ENCODE measurements at regions of chr20 and their contacts with region 1.

Region 1: GRCh38 chr20:48283305-48284080 is 498.2 kb upstream of the SULF2 start:
- DNase-seq: peak; percentile 22 to 23
- ATAC-seq: peak in 7 of 8 donors; percentile 50 to 87 (median 76)
- H3K4me3 ChIP-seq: no peak overlapping the region
- H3K27ac ChIP-seq: no peak overlapping the region
- H3K4me1 ChIP-seq: peaks cover 0 to 57% (median 27%) of the 10 kb centered on the region in 9 donors
- H3K27me3 ChIP-seq: peaks cover 0 to 10% (median 0%) of the 10 kb centered on the region in 7 donors
- CTCF ChIP-seq: no peak

Region 2: GRCh38 chr20:47973519-47974233 is 309.8 kb before region 1 on chr20:
- intact Hi-C with region 1: loop called in 1 of 10 experiments (anchors 10 kb)
- DNase-seq: peak; percentile 49 to 70
- ATAC-seq: peak; percentile 52 to 90 (median 80)
- H3K4me3 ChIP-seq: no peak overlapping the region
- H3K27ac ChIP-seq: peak overlapping the region in 8 of 10 donors; percentile 36 to 87 (median 70)
- H3K4me1 ChIP-seq: peaks cover 0 to 35% (median 18%) of the 10 kb centered on the region in 9 donors
- H3K27me3 ChIP-seq: peaks cover 0 to 21% (median 8%) of the 10 kb centered on the region in 7 donors
- CTCF ChIP-seq: no peak

Region 3: DNA sequence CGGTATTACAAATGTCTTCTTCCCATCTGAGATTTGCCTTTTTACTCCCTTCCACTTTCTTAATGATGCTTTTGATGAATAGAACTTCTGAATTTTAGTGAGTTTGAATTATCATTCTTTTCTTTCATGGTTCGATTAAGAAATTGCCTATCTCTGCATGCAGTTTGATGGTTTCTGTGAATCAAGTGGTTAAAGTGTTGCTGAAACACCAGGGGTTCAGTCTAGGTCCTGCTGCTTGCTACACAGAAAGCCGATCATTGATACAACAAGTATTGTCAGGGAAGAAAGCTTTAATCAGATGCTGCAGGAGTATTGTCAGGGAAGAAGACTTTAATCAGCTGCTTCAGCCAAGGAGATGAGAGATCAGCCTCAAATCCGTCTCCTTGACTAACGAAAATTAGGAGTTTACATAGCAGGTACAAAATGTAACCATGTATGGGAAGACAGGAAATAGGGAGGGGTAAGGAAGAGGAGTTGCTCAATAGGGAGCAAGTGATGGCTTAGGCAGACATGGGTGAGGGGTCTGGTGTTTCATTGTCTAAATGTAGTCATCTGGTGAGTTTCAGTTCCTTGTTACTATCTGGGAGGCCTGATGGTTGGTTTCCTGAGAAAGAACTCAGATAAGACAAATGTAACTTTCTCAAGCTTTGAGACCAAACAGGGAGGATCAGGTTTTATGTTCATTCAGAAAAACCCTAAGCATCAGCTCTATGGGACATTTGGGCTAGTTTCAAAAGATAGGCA is 281.1 kb before region 1 on chr20:
- intact Hi-C with region 1: no loop called
- DNase-seq: no peak
- ATAC-seq: no peak
- H3K4me3 ChIP-seq: no peak overlapping the region
- H3K27ac ChIP-seq: no peak overlapping the region
- H3K4me1 ChIP-seq: peaks cover 0 to 18% (median 0%) of the 10 kb centered on the region in 9 donors
- H3K27me3 ChIP-seq: peaks cover 0 to 24% (median 0%) of the 10 kb centered on the region in 7 donors
- CTCF ChIP-seq: no peak

Region 4: DNA sequence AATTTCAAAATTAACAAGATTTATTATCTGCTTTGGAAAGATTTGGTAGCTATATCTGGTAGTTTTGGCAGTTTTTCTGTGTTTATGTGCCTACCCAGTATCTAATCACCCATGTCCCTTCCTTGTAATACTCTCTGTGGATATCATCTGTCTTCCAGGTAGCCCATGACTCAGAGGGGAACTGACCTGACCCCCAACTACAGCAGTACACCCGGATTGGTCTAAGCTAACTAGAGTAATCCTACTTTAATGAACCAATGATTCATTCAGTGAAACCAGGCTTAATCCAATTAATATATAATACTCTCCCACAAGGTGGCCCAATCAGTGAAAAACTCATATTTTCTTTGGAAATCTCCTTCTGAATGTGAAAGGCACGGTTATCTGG is 202.9 kb before region 1 on chr20:
- intact Hi-C with region 1: no loop called
- DNase-seq: no peak
- ATAC-seq: no peak
- H3K4me3 ChIP-seq: no peak overlapping the region
- H3K27ac ChIP-seq: no peak overlapping the region
- H3K4me1 ChIP-seq: no peaks in the 10 kb centered on the region
- H3K27me3 ChIP-seq: peaks cover 0 to 33% (median 18%) of the 10 kb centered on the region in 7 donors
- CTCF ChIP-seq: no peak